Activated CD8-positive, alpha-beta T cell treated with anti-CD3 and anti-CD28 coated beads, Interleukin-2, amount 10 ng/mL, durations not matched to agents 7 days and 5 days (primary cell): ENCODE measurements at regions of chr13 and their contacts with region 1.

Region 1: DNA sequence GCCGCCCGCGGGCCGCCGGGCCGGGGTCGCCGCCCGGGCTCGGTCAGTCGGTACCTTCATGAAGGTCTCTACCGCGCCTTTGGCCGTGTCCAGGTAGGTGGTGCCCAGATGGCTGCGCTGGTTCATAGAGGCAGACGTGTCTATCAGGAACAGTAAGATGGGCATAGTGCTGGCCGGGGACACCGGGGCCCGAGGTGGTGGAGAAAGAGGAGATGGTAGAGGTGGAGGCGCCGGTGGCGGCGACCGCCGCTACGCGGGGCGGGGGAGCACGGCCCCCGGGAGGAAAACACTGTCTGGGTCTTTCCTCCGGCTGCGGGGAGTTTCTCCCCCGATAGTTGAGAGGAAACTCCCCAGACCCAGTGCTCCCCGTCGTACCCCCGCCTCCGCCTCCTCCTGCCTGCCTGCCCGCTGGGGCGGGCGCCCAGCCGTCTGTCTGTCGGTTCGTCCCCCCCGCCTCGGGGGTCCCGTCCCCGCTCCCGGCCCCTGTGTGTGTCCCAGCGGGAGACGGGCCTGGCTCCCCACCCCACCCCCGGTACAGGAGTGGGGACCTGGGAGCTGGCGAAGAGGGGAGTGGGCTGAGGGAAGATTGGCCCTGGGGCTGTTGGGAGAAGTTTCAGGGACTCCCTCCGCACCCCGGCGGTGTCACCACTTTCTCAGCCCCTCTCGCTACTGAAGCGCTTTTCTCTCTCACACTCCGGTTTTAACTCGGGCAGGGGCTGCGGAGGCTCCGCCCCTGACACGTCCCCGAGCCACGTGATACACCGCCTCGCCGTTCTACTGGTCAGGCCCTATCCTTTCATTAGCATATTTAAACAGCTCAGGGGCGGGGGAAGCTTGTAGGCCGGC is at the start of gene INTS6:
- DNase-seq: peak; percentile 99
- ATAC-seq: peak; percentile 84
- H3K4me3 Mint-ChIP-seq: peak within 1 kb of the TSS; percentile 94
- H3K27ac Mint-ChIP-seq: peak within 1 kb of the TSS; percentile 97
- H3K4me1 Mint-ChIP-seq: peaks cover 36% of the 10 kb centered on the region
- H3K27me3 Mint-ChIP-seq: no peaks in the 10 kb centered on the region
- total RNA-seq, gene INTS6: 48.9 to 52.0 TPM

Region 2: GRCh38 chr13:51583875-51584730 is 131.5 kb after region 1 on chr13 and contains the start of gene WDFY2:
- CTCF ChIA-PET with region 1: interaction called, 8 read pairs
- POLR2A ChIA-PET with region 1: interaction called, 72 read pairs
- DNase-seq: peak; percentile 100
- ATAC-seq: peak; percentile 86
- H3K4me3 Mint-ChIP-seq: peak within 1 kb of the TSS; percentile 88
- H3K27ac Mint-ChIP-seq: peak within 1 kb of the TSS; percentile 96
- H3K4me1 Mint-ChIP-seq: peaks cover 36% of the 10 kb centered on the region
- H3K27me3 Mint-ChIP-seq: peaks cover 4% of the 10 kb centered on the region
- total RNA-seq, gene WDFY2: 11.3 TPM

Region 3: GRCh38 chr13:51614350-51614786 is 161.8 kb after region 1 on chr13:
- CTCF ChIA-PET with region 1: no interaction called
- POLR2A ChIA-PET with region 1: interaction called, 21 read pairs
- DNase-seq: peak; percentile 69
- ATAC-seq: peak; percentile 90
- H3K4me3 Mint-ChIP-seq: peak overlapping the region; percentile 77
- H3K27ac Mint-ChIP-seq: peak overlapping the region; percentile 95
- H3K4me1 Mint-ChIP-seq: peaks cover 15% of the 10 kb centered on the region
- H3K27me3 Mint-ChIP-seq: no peaks in the 10 kb centered on the region

Region 4: GRCh38 chr13:51663973-51664957 is 211.7 kb after region 1 on chr13:
- CTCF ChIA-PET with region 1: no interaction called
- POLR2A ChIA-PET with region 1: no interaction called
- DNase-seq: no peak
- ATAC-seq: no peak
- H3K4me3 Mint-ChIP-seq: no peak overlapping the region
- H3K27ac Mint-ChIP-seq: no peak overlapping the region
- H3K4me1 Mint-ChIP-seq: peaks cover 2% of the 10 kb centered on the region
- H3K27me3 Mint-ChIP-seq: no peaks in the 10 kb centered on the region

Region 5: GRCh38 chr13:51764184-51765141 is 311.9 kb after region 1 on chr13:
- CTCF ChIA-PET with region 1: interaction called, 4 read pairs
- POLR2A ChIA-PET with region 1: interaction called, 19 read pairs
- DNase-seq: peak; percentile 54
- ATAC-seq: peak; percentile 85
- H3K4me3 Mint-ChIP-seq: peak overlapping the region; percentile 69
- H3K27ac Mint-ChIP-seq: peak overlapping the region; percentile 94
- H3K4me1 Mint-ChIP-seq: peaks cover 21% of the 10 kb centered on the region
- H3K27me3 Mint-ChIP-seq: no peaks in the 10 kb centered on the region

Region 6: DNA sequence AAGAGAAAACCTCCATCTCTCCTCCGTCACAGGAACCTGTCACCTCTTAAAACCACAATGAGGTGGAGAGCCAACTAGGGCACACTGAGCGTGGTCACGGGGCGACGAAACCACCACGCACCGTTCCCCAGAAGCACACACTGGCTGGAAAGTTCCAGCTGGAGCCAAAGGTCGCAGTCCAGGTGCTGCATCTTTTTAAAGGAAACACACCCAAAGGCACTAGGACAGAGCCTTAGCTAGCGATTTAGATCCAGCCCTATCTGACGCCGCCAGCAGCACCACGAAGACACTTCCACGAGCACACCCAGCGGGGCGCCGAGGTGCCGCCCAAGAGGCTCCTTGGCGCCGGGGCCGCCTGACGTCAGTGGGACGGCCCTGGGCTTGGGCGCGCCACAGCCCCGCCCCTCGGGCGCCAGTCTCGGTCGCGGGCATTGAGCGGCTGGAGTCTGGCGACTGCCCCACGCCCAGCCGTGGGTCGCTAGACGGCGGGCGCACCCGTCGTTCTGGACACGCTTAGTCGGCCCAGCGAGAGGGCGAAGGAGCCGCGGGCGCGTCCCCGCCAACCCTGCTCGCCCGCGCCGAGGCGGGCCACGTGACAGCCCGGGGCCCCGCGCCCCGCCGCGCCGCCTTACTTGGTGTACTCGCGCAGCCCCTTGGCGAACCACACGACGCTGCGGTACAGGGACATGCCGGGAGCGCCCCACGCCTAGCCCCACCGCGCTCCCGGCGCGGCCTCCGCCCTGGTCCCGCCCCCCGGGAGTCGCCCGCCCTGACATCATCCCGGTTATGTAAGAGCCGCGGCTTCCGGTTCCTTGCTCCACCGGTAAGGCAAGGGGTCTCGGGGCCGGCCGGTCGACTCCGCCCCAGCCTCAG is 351.1 kb after region 1 on chr13 and contains the start of gene DHRS12:
- CTCF ChIA-PET with region 1: interaction called, 30 read pairs
- POLR2A ChIA-PET with region 1: interaction called, 12 read pairs
- DNase-seq: peak; percentile 90
- ATAC-seq: peak; percentile 83
- H3K4me3 Mint-ChIP-seq: peak within 1 kb of the TSS; percentile 88
- H3K27ac Mint-ChIP-seq: peak within 1 kb of the TSS; percentile 99
- H3K4me1 Mint-ChIP-seq: peaks cover 37% of the 10 kb centered on the region
- H3K27me3 Mint-ChIP-seq: no peaks in the 10 kb centered on the region
- total RNA-seq, gene DHRS12: 8.9 to 10.0 TPM